ENCODE measurements at regions of chr16 and their contacts with region 1.

Region 1: GRCh38 chr16:77584205-77584859 is 138.0 kb upstream of the NUDT7 start:
- DNase-seq: peak in 2 of 5 donors; percentile 19 to 36
- ATAC-seq: peak in 2 of 4 donors; percentile 38 to 46
- H3K4me3 ChIP-seq: no peak overlapping the region
- H3K27ac ChIP-seq: peak overlapping the region in 2 of 12 donors; percentile 22 to 41
- H3K4me1 ChIP-seq: peaks cover 0 to 13% (median 0%) of the 10 kb centered on the region in 12 donors
- H3K27me3 ChIP-seq: peaks cover 0 to 11% (median 0%) of the 10 kb centered on the region in 9 donors
- CTCF ChIP-seq: peak; percentile 76 to 95 (median 88)
- POLR2A ChIP-seq: no peak

Region 2: GRCh38 chr16:77437859-77438258 is 146.5 kb before region 1 on chr16:
- intact Hi-C with region 1: loop called in 5 of 10 experiments (anchors 2 to 10 kb)
- DNase-seq: no peak
- ATAC-seq: no peak
- H3K4me3 ChIP-seq: no peak overlapping the region
- H3K27ac ChIP-seq: no peak overlapping the region
- H3K4me1 ChIP-seq: peaks cover 0 to 9% (median 0%) of the 10 kb centered on the region in 12 donors
- H3K27me3 ChIP-seq: peaks cover 4 to 42% (median 25%) of the 10 kb centered on the region in 9 donors
- CTCF ChIP-seq: peak in 7 of 12 donors; percentile 14 to 34 (median 19)
- POLR2A ChIP-seq: no peak

Region 3: DNA sequence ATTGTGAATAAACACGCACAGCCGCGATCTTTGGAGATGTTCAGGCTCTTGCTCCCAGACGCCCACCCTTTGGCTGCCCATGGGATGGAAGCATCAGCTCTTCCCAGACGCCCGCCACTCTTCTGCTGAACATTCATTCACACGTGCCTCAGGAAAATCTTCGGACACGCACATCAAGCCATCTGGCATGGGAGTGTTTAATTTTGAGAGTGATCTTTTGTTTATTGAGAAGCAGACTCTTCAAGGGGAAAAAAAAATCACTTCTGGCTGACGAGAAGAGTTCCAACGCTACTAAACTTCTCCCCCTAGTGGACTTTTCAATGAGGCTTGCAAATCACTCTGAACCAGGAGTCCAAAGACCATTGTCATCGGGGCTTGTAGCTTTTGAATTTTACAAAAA is 76.0 kb after region 1 on chr16:
- intact Hi-C with region 1: loop called in 1 of 10 experiments (anchors 5 kb)
- DNase-seq: no peak
- ATAC-seq: peak in 1 of 4 donors; percentile 30
- H3K4me3 ChIP-seq: no peak overlapping the region
- H3K27ac ChIP-seq: no peak overlapping the region
- H3K4me1 ChIP-seq: peaks cover 0 to 2% (median 0%) of the 10 kb centered on the region in 12 donors
- H3K27me3 ChIP-seq: peaks cover 0 to 9% (median 0%) of the 10 kb centered on the region in 9 donors
- CTCF ChIP-seq: peak; percentile 24 to 63 (median 46)
- POLR2A ChIP-seq: no peak

Region 4: DNA sequence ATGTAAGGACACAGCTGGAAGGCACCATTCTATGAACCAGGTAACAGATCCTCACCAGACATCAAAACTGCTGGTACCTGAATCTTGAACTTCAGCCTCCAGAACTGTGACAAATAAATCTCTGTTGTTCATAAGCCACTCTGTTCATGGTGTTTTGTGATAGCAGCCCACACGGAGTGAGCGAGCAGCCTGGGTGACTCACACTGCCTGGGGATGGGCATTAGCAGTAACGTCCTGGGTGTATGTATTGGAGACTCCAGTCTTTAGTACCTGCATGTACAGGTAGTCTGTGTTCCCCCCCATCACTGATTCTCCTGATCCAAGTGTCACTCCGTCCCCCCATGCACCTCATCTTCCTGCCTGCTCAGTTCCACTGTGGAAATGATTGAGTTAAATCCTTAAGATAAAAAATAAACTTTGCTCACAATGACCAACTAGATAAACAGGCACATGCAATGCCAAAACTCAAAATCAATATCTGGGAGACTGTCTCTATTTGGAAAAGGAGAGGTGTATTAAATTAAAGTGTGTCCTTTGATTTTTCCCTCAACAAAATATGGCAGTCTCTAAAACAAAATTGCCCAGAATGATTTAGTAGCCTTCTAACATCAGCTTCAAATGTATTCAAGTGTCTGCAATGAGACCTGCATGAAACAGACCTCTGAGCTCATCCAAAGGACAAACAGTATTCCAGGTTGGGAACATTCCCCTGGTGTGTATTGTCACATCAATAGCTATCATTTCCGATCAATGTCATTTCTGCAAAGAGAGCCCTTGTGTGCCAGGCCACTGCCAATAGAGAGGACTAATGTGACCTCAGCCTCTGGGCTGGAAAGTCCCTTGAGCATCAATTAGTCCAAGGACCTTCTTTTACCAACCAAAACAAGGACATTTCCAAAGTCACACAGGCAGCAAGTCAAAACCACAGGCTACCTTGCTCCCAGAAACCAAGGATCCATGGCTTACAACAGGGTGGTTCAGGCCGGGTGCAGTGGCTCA is 191.9 kb after region 1 on chr16:
- intact Hi-C with region 1: no loop called
- DNase-seq: no peak
- ATAC-seq: no peak
- H3K4me3 ChIP-seq: no peak overlapping the region
- H3K27ac ChIP-seq: no peak overlapping the region
- H3K4me1 ChIP-seq: no peaks in the 10 kb centered on the region
- H3K27me3 ChIP-seq: no peaks in the 10 kb centered on the region
- CTCF ChIP-seq: no peak
- POLR2A ChIP-seq: no peak

Region 5: GRCh38 chr16:78310990-78311561 is 726.7 kb after region 1 on chr16:
- intact Hi-C with region 1: loop called in 1 of 10 experiments (anchors 10 kb)
- DNase-seq: no peak
- ATAC-seq: no peak
- H3K4me3 ChIP-seq: no peak overlapping the region
- H3K27ac ChIP-seq: no peak overlapping the region
- H3K4me1 ChIP-seq: no peaks in the 10 kb centered on the region
- H3K27me3 ChIP-seq: no peaks in the 10 kb centered on the region
- CTCF ChIP-seq: no peak
- POLR2A ChIP-seq: no peak